Natural killer cell (primary cell): ENCODE measurements at regions of chr17 and their contacts with region 1.

Region 1: GRCh38 chr17:46995841-46996571 is 17.0 kb upstream of the RPRML start:
- DNase-seq: no peak
- ATAC-seq: no peak
- H3K4me3 ChIP-seq: no peak overlapping the region
- H3K4me3 Mint-ChIP-seq: no peak overlapping the region
- H3K27ac ChIP-seq: no peak overlapping the region
- H3K27ac Mint-ChIP-seq: no peak overlapping the region
- H3K4me1 ChIP-seq: no peaks in the 10 kb centered on the region
- H3K4me1 Mint-ChIP-seq: no peaks in the 10 kb centered on the region
- H3K27me3 ChIP-seq: no peaks in the 10 kb centered on the region
- H3K27me3 Mint-ChIP-seq: no peaks in the 10 kb centered on the region
- CTCF ChIP-seq: no peak

Region 2: GRCh38 chr17:46940621-46941404 is 55.2 kb before region 1 on chr17:
- intact Hi-C with region 1: loop called (anchors 1 kb)
- DNase-seq: peak; percentile 43 to 78
- ATAC-seq: peak; percentile 75 to 77 (median 76)
- H3K4me3 ChIP-seq: no peak overlapping the region
- H3K4me3 Mint-ChIP-seq: no peak overlapping the region
- H3K27ac ChIP-seq: no peak overlapping the region
- H3K27ac Mint-ChIP-seq: peak overlapping the region; percentile 33 to 36
- H3K4me1 ChIP-seq: peaks cover 32% of the 10 kb centered on the region
- H3K4me1 Mint-ChIP-seq: peaks cover 22 to 27% of the 10 kb centered on the region in 2 donors
- H3K27me3 ChIP-seq: no peaks in the 10 kb centered on the region
- H3K27me3 Mint-ChIP-seq: no peaks in the 10 kb centered on the region
- CTCF ChIP-seq: peak; percentile 58